Activated T-helper 1 cell treated with anti-CD3 and anti-CD28 coated beads, Interleukin-12 subunit alpha, Interleukin-12 subunit beta, Interleukin-2, Interleukin-4 antibody, amounts not matched to agents 30 ng/mL and 10 ng/mL and 1 ng/mL, durations not matched to agents 14 hours and 24 hours and 36 hours (primary cell): ENCODE measurements at regions of chr10 and their contacts with region 1.

Region 1: GRCh38 chr10:74227697-74228424 is 76.8 kb downstream of the ADK start:
- DNase-seq: no peak
- H3K4me3 Mint-ChIP-seq: peak overlapping the region; percentile 16
- H3K27ac Mint-ChIP-seq: peak overlapping the region; percentile 85
- H3K4me1 Mint-ChIP-seq: peaks cover 40% of the 10 kb centered on the region
- H3K27me3 Mint-ChIP-seq: no peaks in the 10 kb centered on the region

Region 2: DNA sequence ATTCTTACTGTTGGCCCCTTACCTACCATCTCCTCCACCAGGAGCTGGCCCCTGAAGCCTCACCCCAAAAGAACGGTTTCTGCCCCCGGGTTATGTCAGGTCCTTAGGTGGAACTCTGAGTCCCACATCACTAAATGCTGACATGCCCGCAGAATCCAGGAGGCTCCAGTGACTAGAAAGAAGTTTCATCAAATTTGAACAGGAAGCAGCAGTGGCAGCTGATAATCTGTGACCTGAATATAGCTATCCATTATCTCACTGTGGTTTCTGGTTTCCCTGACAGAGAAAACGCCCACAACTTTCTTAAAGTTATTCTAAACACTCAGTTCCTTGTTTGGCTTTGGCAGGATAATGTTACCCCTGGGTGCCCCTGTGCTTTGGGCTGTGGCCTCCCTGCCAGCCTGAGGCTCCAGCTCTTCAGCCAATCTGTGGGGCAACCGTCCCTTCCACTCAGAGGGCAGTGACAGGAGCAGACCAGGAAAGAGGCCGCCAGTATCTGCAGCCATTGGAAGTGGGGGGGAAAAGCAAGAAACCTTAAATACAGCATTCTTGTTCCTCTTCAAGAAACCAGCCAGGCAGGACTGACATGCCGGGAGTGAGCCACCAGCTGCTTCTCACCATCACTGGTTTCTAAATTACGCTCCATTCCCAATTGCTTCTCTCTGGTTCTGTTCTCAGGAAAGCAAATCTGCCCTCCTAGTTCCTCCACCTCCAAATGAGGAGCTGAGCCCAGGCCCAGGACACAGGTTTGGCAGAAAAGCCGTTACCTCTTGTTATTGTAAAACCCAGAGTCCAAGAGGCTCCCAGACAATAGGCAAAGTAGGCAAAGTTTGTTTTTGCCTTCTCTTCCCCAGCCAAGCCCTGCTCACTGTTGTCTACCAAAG is 271.1 kb before region 1 on chr10:
- intact Hi-C with region 1: no loop called
- DNase-seq: peak; percentile 20
- H3K4me3 Mint-ChIP-seq: peak overlapping the region; percentile 49
- H3K27ac Mint-ChIP-seq: peak overlapping the region; percentile 81
- H3K4me1 Mint-ChIP-seq: peaks cover 48% of the 10 kb centered on the region
- H3K27me3 Mint-ChIP-seq: no peaks in the 10 kb centered on the region

Region 3: GRCh38 chr10:74071157-74071556 is 156.7 kb before region 1 on chr10:
- intact Hi-C with region 1: no loop called
- DNase-seq: no peak
- H3K4me3 Mint-ChIP-seq: no peak overlapping the region
- H3K27ac Mint-ChIP-seq: no peak overlapping the region
- H3K4me1 Mint-ChIP-seq: peaks cover 4% of the 10 kb centered on the region
- H3K27me3 Mint-ChIP-seq: no peaks in the 10 kb centered on the region

Region 4: GRCh38 chr10:74189999-74190421 is 37.9 kb before region 1 on chr10:
- intact Hi-C with region 1: loop called (anchors 5 kb)
- DNase-seq: peak; percentile 9
- H3K4me3 Mint-ChIP-seq: peak overlapping the region; percentile 58
- H3K27ac Mint-ChIP-seq: peak overlapping the region; percentile 72
- H3K4me1 Mint-ChIP-seq: peaks cover 47% of the 10 kb centered on the region
- H3K27me3 Mint-ChIP-seq: no peaks in the 10 kb centered on the region

Region 5: GRCh38 chr10:74598891-74599566 is 371.2 kb after region 1 on chr10:
- intact Hi-C with region 1: no loop called
- DNase-seq: no peak
- H3K4me3 Mint-ChIP-seq: no peak overlapping the region
- H3K27ac Mint-ChIP-seq: no peak overlapping the region
- H3K4me1 Mint-ChIP-seq: peaks cover 13% of the 10 kb centered on the region
- H3K27me3 Mint-ChIP-seq: no peaks in the 10 kb centered on the region